ENCODE measurements at regions of chr17 and their contacts with region 1.

Region 1: DNA sequence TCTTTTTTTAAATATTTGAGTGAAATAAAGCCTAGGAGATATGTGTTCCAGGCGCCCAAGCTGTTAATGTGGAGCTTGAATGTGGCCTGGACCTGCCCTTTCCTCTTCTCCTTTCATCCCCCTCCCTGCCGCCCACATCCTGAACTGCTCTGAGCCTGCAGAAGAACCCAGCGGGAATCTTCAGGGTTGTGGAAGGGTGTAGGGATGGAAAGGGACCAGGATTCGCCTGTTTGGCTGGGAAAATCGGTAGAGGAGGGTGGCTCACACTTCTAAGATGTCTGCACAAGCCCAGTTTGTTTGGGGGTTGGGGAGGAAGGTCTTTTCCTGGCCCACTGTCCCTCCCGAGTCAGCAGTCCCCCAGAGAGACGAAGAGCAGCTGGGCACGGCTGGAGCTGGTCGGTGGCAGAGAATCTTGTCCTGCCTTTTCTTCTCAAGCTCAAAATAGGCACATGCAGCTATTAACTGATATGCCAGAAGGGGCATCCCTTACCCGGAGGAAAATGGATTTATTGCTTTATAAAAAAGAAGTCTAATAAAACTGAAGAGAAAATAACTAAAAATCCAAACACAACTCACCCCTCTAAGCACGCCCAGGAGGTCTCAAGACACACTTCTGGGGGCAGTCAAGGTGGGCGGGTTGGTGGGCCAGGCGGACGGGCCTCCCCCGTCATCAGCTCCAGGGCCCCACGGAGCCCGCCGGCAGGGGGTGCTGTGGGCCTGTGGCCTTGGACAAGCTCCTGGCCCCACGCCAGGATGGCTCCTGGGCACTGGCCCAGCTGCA is 11.5 kb upstream of the PITPNA start:
- DNase-seq: peak; percentile 83
- ATAC-seq: peak; percentile 73
- H3K4me3 ChIP-seq: no peak overlapping the region
- H3K4me3 Mint-ChIP-seq: no peak overlapping the region
- H3K27ac ChIP-seq: peak overlapping the region in 1 of 2 donors; percentile 10
- H3K27ac Mint-ChIP-seq: no peak overlapping the region
- H3K4me1 ChIP-seq: peaks cover 12 to 32% of the 10 kb centered on the region in 2 donors
- H3K4me1 Mint-ChIP-seq: peaks cover 20% of the 10 kb centered on the region
- H3K27me3 ChIP-seq: no peaks in the 10 kb centered on the region
- H3K27me3 Mint-ChIP-seq: no peaks in the 10 kb centered on the region
- CTCF ChIP-seq: peak; percentile 82

Region 2: DNA sequence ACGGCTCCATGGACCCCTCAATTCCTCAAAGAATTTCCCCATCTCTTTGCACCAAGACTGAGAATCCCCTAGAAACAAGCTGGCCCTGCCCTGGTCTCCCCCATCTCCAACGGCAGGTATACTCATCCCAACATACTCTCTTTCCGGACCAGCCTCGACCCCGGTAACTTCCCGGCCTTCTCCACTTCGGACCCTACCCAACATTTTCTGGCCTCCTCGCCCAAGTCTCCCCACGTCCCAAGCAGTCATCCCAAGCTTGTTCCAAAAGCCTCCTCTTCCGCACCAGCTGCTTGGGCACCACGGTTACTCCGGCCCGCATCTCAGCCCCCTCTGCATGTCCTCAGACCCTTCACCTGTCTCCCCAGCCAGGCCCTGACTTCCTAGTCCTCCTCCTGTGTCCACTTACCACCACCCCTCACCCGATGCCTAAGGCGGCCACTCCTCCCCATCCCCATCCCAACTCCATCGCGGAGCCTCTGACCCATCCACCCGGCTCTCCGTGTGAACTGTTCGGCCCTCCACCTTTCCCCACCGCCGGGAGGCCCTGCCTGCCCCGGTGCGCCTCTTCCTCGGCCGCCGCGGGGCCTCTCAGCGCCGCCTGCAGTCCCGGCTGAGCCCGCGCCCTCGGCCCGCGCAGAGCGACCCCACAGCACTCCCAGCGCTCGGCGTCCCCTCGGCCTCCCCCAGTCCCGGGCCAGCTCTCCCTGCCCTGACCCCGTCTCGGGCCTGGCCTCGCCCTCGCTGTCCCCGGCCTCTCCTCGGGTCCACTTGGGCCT is 12.5 kb before region 1 on chr17:
- CTCF ChIA-PET with region 1: interaction called, 10 read pairs
- POLR2A ChIA-PET with region 1: interaction called, 9 read pairs
- intact Hi-C with region 1: no loop called
- DNase-seq: peak; percentile 67
- ATAC-seq: peak; percentile 37
- H3K4me3 ChIP-seq: peak overlapping the region; percentile 8 to 72 (median 64)
- H3K4me3 Mint-ChIP-seq: peak overlapping the region; percentile 89
- H3K27ac ChIP-seq: peak overlapping the region in 1 of 2 donors; percentile 78
- H3K27ac Mint-ChIP-seq: peak overlapping the region; percentile 78
- H3K4me1 ChIP-seq: peaks cover 20 to 29% of the 10 kb centered on the region in 2 donors
- H3K4me1 Mint-ChIP-seq: peaks cover 39% of the 10 kb centered on the region
- H3K27me3 ChIP-seq: no peaks in the 10 kb centered on the region
- H3K27me3 Mint-ChIP-seq: no peaks in the 10 kb centered on the region
- CTCF ChIP-seq: peak; percentile 36

Region 3: GRCh38 chr17:1590031-1590748 is 16.1 kb after region 1 on chr17:
- CTCF ChIA-PET with region 1: interaction called, 29 read pairs
- POLR2A ChIA-PET with region 1: interaction called, 8 read pairs
- intact Hi-C with region 1: loop called (anchors 2 kb)
- DNase-seq: no peak
- ATAC-seq: no peak
- H3K4me3 ChIP-seq: no peak overlapping the region
- H3K4me3 Mint-ChIP-seq: no peak overlapping the region
- H3K27ac ChIP-seq: no peak overlapping the region
- H3K27ac Mint-ChIP-seq: peak overlapping the region; percentile 74
- H3K4me1 ChIP-seq: peaks cover 24 to 35% of the 10 kb centered on the region in 2 donors
- H3K4me1 Mint-ChIP-seq: peaks cover 27% of the 10 kb centered on the region
- H3K27me3 ChIP-seq: no peaks in the 10 kb centered on the region
- H3K27me3 Mint-ChIP-seq: no peaks in the 10 kb centered on the region
- CTCF ChIP-seq: no peak

Region 4: DNA sequence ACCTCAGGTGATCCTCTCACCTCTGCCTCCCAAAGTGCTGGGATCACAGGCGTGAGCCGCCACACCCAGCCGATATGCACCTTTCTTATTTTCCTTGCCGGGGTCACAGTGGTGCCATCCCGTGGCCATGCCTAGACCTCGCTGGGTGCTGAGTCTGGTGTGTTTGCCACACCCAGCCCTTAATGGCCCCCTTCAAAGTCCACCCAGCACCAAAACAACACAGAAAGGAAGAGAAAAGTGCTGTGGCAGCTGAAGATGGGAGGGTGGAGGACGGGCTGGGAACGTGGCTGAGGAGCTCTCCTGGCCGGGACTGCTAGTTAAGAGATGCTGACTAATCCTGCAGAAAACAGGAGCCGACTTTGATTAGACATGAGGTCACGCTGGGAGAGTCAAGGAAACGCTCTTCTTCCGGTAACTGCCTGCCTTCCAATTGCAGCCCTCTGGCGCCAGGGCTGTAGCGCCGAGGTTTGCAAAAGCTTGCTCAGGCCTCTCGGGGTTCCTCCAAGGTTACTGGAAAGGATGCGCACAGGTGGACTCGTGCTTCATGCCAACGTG is 43.6 kb after region 1 on chr17:
- CTCF ChIA-PET with region 1: interaction called, 28 read pairs
- POLR2A ChIA-PET with region 1: interaction called, 3 read pairs
- intact Hi-C with region 1: no loop called
- DNase-seq: no peak
- ATAC-seq: no peak
- H3K4me3 ChIP-seq: no peak overlapping the region
- H3K4me3 Mint-ChIP-seq: no peak overlapping the region
- H3K27ac ChIP-seq: no peak overlapping the region
- H3K27ac Mint-ChIP-seq: no peak overlapping the region
- H3K4me1 ChIP-seq: no peaks in the 10 kb centered on the region
- H3K4me1 Mint-ChIP-seq: peaks cover 4% of the 10 kb centered on the region
- H3K27me3 ChIP-seq: no peaks in the 10 kb centered on the region
- H3K27me3 Mint-ChIP-seq: no peaks in the 10 kb centered on the region
- CTCF ChIP-seq: no peak

Region 5: DNA sequence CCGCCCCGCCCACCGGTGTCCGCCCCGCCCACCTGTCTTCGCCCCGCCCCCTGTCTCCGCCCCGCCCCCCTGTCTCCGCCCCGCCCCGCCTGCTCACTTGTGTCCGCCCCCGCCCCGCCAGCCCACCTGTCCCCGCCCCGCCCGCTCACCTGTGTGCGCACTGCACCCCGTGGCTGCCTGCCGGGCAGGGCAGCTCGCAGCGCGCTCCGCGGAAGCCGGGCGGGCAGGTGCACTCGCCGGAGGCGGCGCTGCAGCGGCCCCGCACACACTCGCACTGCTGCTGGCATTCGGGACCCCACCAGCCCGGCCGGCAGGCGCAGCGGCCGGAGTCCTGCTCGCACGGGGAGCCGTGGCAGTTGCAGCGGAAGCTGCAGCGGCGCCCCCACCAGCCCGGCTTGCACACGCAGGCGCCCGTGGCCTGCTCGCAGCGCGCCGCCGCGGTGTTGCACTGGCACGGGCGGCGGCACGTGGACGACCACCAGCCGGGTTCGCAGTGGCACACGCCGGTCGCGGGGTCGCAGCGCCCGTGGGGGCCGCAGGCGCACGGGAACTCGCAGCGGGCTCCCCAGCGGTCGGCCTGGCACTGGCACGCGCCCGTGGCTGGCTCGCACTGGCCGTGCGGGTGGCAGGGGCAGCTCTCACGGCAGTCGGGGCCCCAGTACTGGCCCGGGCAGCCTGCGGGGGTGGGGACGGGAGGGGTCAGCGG is 69.3 kb after region 1 on chr17:
- CTCF ChIA-PET with region 1: interaction called, 93 read pairs
- POLR2A ChIA-PET with region 1: interaction called, 12 read pairs
- intact Hi-C with region 1: no loop called
- DNase-seq: peak; percentile 74
- ATAC-seq: peak; percentile 39
- H3K4me3 ChIP-seq: peak overlapping the region in 4 of 5 experiments; percentile 19 to 66 (median 46)
- H3K4me3 Mint-ChIP-seq: peak overlapping the region; percentile 91
- H3K27ac ChIP-seq: no peak overlapping the region
- H3K27ac Mint-ChIP-seq: no peak overlapping the region
- H3K4me1 ChIP-seq: peaks cover 28 to 32% of the 10 kb centered on the region in 2 donors
- H3K4me1 Mint-ChIP-seq: peaks cover 30% of the 10 kb centered on the region
- H3K27me3 ChIP-seq: peaks cover 0 to 3% (median 0%) of the 10 kb centered on the region in 4 experiments
- H3K27me3 Mint-ChIP-seq: no peaks in the 10 kb centered on the region
- CTCF ChIP-seq: peak; percentile 32

Region 6: DNA sequence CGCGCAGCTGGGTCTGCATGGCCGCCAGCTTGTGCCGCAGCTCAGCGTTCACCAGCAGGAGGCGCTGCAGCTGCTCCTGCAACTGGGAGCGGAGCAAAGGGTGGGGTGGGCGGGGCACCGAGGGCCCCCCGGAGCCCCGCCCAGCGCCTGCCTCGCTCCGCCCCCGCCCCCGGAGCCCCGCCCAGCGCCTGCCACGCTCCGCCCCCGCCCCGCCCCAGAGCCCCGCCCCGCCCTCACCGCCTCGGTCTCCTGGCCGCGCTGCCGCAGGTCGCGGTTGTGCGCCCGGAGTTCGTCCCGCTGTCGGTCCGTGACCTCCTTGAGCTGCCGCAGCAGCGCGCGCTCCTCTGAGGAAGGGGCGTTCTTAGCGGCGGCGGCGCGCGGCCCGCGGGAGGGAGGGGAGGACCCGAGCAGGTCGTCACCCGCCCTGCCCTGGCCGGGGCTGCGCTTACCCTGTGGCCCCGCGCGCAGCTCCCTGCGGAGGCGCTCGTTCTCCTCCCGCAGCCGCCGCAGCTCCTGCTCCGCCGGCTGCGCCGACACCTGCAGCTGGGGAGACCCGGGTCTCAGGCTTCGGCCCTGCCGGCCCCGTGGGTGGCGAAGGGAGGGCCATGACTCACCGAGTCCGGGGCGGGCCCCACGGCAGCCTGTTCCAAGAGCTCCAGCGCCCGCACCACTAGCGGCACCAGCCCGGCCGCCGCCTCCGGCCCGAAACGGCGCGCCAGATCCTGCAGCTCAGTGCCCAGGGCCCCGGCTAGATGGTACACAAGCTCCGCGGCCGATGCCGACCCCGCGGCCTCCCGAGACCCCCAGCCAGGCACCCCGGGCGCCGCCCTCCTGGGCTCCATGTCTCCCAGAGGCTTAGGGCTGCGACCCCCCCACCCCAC is 75.1 kb after region 1 on chr17:
- CTCF ChIA-PET with region 1: interaction called, 93 read pairs
- POLR2A ChIA-PET with region 1: interaction called, 12 read pairs
- intact Hi-C with region 1: loop called (anchors 1 kb)
- DNase-seq: peak; percentile 96
- ATAC-seq: peak; percentile 72
- H3K4me3 ChIP-seq: peak overlapping the region in 4 of 5 experiments; percentile 35 to 75 (median 60)
- H3K4me3 Mint-ChIP-seq: peak overlapping the region; percentile 79
- H3K27ac ChIP-seq: peak overlapping the region in 1 of 2 donors; percentile 28
- H3K27ac Mint-ChIP-seq: peak overlapping the region; percentile 75
- H3K4me1 ChIP-seq: peaks cover 26 to 36% of the 10 kb centered on the region in 2 donors
- H3K4me1 Mint-ChIP-seq: peaks cover 30% of the 10 kb centered on the region
- H3K27me3 ChIP-seq: no peaks in the 10 kb centered on the region
- H3K27me3 Mint-ChIP-seq: no peaks in the 10 kb centered on the region
- CTCF ChIP-seq: peak; percentile 79

Region 7: GRCh38 chr17:1673041-1673785 is 99.1 kb after region 1 on chr17:
- CTCF ChIA-PET with region 1: interaction called, 15 read pairs
- POLR2A ChIA-PET with region 1: no interaction called
- intact Hi-C with region 1: no loop called
- DNase-seq: no peak
- ATAC-seq: no peak
- H3K4me3 ChIP-seq: no peak overlapping the region
- H3K4me3 Mint-ChIP-seq: no peak overlapping the region
- H3K27ac ChIP-seq: no peak overlapping the region
- H3K27ac Mint-ChIP-seq: no peak overlapping the region
- H3K4me1 ChIP-seq: no peaks in the 10 kb centered on the region
- H3K4me1 Mint-ChIP-seq: peaks cover 7% of the 10 kb centered on the region
- H3K27me3 ChIP-seq: no peaks in the 10 kb centered on the region
- H3K27me3 Mint-ChIP-seq: no peaks in the 10 kb centered on the region
- CTCF ChIP-seq: no peak

Measured in B cell (primary cell).